ENCODE measurements at regions of chr22 and their contacts with region 1.

Region 1: DNA sequence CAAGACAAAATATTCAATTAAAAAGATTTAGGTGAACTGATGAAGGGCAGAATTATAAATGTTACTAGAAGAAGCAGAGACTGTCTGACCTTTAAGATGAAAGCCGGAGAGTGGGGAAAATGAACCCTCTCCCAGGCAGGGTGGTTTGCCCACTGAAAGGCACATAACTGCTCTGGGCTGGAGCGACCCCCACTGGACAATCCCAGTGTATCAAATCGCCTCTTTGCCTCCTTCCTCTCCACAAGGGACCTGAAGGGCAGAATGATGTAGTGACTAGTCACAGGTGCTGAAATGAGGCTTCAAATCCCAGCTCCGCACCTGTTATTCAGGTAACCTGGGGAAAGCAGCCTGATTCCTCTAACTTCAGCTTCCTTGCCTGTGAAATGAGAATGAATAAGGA is 69.0 kb downstream of the EFCAB6 start:
- DNase-seq: peak; percentile 31 to 78
- H3K4me3 ChIP-seq: no peak overlapping the region
- H3K27ac ChIP-seq: no peak overlapping the region
- H3K4me1 ChIP-seq: peaks cover 0 to 15% (median 8%) of the 10 kb centered on the region in 4 experiments; a peak in 4 of 7 replicates
- H3K27me3 ChIP-seq: no peaks in the 10 kb centered on the region
- CTCF ChIP-seq: peak; percentile 80 to 85 (median 83)
- EP300 ChIP-seq: no peak
- POLR2A ChIP-seq: no peak
- RAD21 ChIP-seq: peak; percentile 90 to 95

Region 2: GRCh38 chr22:43600265-43600664 is 142.9 kb before region 1 on chr22:
- CTCF ChIA-PET with region 1: interaction called, 18 read pairs
- POLR2A ChIA-PET with region 1: no interaction called
- DNase-seq: no peak
- H3K4me3 ChIP-seq: no peak overlapping the region
- H3K27ac ChIP-seq: no peak overlapping the region
- H3K4me1 ChIP-seq: peaks cover 0 to 6% (median 5%) of the 10 kb centered on the region in 4 experiments; a peak in 5 of 7 replicates
- H3K27me3 ChIP-seq: no peaks in the 10 kb centered on the region
- CTCF ChIP-seq: no peak
- EP300 ChIP-seq: no peak
- POLR2A ChIP-seq: no peak
- RAD21 ChIP-seq: no peak

Region 3: DNA sequence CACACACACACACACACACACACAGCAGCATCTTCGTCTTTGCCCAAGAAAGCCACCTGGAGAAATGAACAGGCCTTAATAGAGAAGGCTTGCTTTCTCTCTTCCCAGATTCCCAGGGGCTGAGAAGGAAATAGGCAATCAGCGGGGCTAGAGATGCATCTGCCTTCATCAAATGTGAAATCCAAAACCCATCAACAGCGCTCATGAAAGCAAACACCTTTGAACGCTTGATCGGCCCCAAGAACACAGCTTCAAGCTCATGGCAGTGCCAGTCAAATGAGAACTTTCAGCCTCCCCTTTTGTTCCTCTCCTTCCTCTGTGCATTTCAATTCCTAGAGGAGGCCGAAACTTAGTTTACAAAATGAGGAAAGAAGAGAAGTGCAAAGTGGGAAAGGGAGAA is 53.8 kb before region 1 on chr22:
- CTCF ChIA-PET with region 1: no interaction called
- POLR2A ChIA-PET with region 1: no interaction called
- DNase-seq: no peak
- H3K4me3 ChIP-seq: no peak overlapping the region
- H3K27ac ChIP-seq: no peak overlapping the region
- H3K4me1 ChIP-seq: no peaks in the 10 kb centered on the region
- H3K27me3 ChIP-seq: no peaks in the 10 kb centered on the region
- CTCF ChIP-seq: no peak
- EP300 ChIP-seq: no peak
- POLR2A ChIP-seq: no peak
- RAD21 ChIP-seq: no peak

Region 4: DNA sequence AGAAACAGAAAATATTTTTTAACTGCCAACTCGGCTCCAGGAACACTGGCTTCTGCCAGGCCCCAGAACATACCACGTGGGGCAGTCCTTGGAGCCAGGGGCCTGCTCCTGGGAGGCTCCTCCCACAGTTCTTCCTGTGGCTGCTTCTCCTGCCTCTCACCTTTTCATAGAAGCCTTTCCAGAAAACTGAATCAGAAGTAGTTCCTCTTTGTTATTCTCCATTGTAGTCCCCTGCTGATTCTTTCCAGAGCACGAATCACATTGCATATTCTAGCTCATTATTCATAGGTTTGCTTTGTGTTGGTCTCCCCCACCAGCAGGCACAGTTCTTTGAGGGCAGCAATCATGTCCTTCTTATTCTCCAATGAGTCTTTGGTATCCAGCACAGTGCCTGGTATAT is 37.0 kb before region 1 on chr22:
- CTCF ChIA-PET with region 1: no interaction called
- POLR2A ChIA-PET with region 1: no interaction called
- DNase-seq: no peak
- H3K4me3 ChIP-seq: no peak overlapping the region
- H3K27ac ChIP-seq: no peak overlapping the region
- H3K4me1 ChIP-seq: no peaks in the 10 kb centered on the region; a peak in 3 of 7 replicates
- H3K27me3 ChIP-seq: no peaks in the 10 kb centered on the region
- CTCF ChIP-seq: no peak
- EP300 ChIP-seq: no peak
- POLR2A ChIP-seq: no peak
- RAD21 ChIP-seq: no peak

Region 5: DNA sequence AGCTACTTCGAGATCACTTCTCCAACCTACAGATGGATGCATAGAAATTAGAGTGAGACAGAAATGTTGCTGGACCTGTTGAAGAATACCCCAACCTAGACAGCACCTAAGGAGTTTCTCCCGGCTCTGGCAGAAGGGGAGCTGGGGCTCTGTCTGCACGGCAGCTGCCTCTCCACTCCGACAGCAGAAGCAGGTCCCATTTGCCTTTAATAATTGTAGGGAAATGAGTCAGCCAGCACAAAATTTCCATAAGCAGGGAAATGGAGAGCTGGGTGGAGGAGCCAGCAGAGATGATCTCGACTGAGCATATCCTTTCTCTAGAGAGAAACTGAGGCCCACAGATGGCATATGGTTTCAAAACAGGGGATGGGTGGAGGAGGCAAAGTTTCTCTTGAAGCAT is 11.1 kb before region 1 on chr22:
- CTCF ChIA-PET with region 1: interaction called, 15 read pairs
- POLR2A ChIA-PET with region 1: no interaction called
- DNase-seq: no peak
- H3K4me3 ChIP-seq: no peak overlapping the region
- H3K27ac ChIP-seq: no peak overlapping the region
- H3K4me1 ChIP-seq: no peaks in the 10 kb centered on the region
- H3K27me3 ChIP-seq: no peaks in the 10 kb centered on the region
- CTCF ChIP-seq: no peak
- EP300 ChIP-seq: no peak
- POLR2A ChIP-seq: no peak
- RAD21 ChIP-seq: no peak

Region 6: DNA sequence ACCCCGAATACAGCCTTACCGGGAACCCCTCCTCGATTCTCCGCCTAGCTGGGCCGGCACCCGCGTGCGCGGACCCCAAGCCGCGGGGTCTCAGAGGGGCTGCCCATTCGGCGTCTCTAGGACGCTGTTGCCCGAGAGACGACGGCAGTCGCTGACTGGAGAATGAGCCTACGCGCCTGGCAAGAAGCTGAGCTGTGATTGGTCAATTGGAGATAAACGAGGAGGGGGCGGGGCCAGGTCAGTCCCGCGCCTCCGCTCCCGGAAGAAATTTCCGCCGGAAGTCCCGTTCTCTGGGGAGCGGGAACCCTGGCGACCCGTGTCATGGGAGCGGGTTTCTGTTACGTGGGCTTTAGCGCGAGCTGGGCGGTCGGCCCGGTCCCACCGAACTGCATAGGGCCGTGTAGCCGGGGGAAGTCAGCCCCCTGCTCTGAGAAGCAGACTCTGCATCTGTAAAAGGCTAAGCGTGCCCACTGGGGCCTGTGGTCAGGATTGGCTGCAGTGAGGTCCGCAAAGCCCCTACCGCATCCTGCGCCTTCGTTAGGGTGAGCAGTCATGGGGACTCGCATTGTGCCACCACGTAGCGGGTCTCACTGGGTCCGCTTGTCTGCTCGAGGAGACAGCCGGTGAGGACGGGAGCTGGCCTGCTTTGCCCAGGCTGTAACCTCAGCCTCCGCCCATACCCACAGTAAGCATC is 69.2 kb after region 1 on chr22 and contains the start of gene EFCAB6:
- CTCF ChIA-PET with region 1: no interaction called
- POLR2A ChIA-PET with region 1: no interaction called
- DNase-seq: peak; percentile 83 to 93
- H3K4me3 ChIP-seq: peak within 1 kb of the TSS; percentile 67 to 86 (median 76)
- H3K27ac ChIP-seq: peak within 1 kb of the TSS; percentile 90
- H3K4me1 ChIP-seq: peaks cover 0 to 13% (median 5%) of the 10 kb centered on the region in 4 experiments; a peak in 6 of 7 replicates
- H3K27me3 ChIP-seq: no peaks in the 10 kb centered on the region
- CTCF ChIP-seq: no peak
- EP300 ChIP-seq: no peak
- POLR2A ChIP-seq: peak in 1 of 2 experiments; percentile 77; a peak in 2 of 3 replicates
- RAD21 ChIP-seq: 0 out of 4 replicates have a peak, but pooled peaks of 1 of the 2 experiments have one; percentile 0
- total RNA-seq, gene EFCAB6: 1.5 and 1.7 TPM in 2 replicates

Measured in H1 (cell line).